ENCODE measurements at regions of chr11 and their contacts with region 1.

Region 1: DNA sequence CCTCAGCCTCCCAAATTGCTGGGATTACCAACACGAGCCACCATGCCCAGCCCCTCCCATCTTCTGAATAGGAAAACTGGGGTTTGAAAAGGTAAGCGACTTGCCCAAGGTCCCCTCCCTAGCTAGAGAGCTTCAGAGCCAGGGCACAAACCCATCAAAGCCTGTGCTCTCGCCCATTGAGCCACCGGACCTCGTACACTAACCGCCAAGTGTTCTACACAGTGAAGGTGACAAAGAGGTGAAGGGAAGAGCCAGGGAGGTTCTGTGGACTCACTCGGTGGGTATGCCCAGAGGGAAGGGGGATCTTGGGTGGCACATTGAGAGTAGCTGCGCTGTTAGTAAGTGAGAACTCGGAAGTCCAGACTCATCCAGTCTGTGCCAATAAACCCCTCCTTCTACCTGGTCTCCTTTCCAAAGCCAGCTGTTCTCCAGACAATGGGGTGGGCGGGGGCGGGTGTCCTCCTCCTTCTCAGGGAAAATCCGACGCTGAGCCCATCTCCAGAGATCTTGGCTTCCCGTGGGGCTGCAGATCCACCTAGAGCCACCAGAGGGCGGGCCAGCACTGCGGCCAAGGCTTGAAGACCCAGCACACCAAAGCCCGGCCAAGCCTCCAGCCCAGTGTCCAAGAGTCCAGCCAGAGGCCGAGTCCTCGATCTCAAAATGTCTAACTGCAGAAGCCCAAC is 3.2 kb upstream of the RTN4RL2 start:
- DNase-seq: peak; percentile 93
- ATAC-seq: peak; percentile 85 to 86

Region 2: DNA sequence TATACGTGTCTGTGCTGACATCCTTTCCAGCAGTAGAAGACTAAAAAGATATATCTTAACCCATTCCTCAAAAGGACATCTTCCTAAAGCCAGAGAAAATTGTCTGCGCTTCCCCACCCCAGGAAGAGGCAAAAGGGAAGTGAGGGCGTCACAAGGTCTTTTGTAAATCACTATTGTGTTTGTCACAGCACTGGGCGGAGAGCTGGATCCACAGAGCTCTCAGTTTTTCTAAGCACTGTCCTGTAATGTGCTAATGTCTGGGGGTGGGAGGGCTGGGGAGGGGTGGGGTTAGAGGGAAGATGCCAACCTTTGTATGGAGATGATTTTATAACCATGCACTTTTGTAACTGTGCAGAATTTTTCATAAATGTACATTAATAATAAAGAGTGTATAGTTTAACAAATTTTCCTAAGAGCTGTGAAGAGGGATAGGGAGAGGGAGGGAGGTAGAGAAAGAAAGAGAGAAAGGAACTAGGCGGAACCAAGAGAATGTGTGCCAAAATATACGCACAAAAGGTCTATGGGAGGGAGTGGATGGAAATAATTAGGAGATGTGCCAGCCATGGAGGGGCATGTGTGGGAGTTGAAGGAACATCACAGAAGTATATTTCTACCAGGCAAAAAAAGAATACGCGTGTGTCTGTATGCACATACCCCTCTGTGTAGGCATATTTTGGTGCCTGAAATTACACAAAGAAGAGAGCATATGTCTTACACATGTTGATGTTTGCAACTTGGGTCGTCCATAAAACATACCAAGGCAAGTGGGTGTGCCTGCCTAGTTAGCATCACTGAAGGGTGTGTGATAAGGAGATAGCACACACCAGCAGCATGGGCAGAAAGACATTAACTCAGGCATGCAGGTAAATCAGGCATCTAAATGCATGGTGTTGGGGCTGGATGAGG is 265.5 kb before region 1 on chr11:
- intact Hi-C with region 1: no loop called
- DNase-seq: no peak
- ATAC-seq: no peak

Region 3: DNA sequence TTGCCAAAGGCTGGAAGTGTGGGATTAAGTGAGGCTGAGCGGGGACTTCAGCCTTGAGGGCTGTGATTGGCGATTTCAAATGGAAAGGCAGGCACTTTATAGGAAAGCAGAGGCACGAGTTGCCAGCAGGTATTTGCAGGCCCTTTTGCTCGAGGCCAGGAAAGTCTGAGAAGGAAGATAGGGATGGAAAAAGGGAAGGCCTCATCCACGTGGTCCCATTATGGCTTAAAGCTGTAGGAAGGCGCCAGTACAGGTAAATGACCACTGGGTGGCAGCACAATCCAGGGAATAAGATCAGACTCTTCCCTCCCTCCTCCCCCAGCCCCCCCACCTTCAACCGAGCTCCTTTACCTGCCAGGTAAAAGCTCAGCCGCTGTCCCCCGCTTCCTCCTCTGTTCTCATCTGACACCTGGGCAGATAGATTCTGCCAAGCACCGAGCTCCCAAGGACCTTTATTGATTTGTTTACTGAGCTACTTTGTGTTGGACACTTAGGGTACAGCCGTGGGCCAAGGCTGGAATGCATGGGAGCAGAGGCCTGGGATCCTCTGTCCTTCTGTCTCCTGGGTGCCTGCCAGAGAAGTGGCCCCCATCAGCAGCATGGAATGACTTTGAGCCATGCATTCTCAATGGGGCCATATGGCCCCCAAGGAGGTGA is 111.4 kb before region 1 on chr11:
- intact Hi-C with region 1: loop called in 1 of 2 experiments (anchors 2 kb)
- DNase-seq: peak; percentile 74
- ATAC-seq: peak; percentile 68 to 75

Region 4: DNA sequence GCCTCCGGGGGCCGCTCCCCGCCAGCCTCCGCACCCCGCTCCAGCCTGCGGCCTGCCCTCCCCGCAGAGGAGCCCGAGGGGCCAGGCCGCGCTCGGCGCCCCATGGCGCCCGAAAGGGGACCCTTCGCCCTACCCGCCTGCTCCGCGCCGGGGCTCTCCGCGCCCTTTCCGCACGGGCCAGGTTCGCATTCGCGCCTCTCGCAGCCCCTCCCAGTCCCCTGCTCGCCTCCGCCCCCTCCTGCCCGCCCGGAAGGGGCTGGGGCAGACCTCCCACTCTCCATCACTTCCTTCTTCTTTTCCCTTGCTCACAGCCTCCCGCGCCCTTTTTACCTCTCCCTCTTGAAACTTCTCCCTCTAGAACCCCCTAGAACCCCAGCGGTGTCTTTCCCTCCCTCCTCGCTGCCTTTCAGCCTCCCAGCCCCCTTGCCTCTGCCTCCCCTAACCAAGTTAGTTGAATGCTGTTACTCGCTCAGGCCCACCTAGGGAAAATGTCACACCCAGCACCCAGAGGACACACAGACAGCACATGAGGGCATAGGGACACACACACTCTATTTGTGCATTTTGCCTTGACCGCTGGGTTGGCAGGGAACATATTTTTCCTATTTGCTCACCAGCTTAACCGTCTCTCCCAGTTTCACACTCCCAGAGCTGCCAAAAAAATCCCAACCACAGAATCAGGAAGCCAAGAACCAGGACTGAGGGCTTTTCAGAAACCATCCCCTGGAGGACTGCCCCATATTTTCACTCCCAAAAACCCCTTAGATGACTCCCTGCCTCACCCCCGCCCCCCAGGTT is 30.0 kb before region 1 on chr11 and contains the start of gene SLC43A3:
- intact Hi-C with region 1: no loop called
- DNase-seq: peak; percentile 74
- ATAC-seq: peak; percentile 72 to 82
- total RNA-seq, gene SLC43A3: 39.3 to 46.7 TPM

Region 5: DNA sequence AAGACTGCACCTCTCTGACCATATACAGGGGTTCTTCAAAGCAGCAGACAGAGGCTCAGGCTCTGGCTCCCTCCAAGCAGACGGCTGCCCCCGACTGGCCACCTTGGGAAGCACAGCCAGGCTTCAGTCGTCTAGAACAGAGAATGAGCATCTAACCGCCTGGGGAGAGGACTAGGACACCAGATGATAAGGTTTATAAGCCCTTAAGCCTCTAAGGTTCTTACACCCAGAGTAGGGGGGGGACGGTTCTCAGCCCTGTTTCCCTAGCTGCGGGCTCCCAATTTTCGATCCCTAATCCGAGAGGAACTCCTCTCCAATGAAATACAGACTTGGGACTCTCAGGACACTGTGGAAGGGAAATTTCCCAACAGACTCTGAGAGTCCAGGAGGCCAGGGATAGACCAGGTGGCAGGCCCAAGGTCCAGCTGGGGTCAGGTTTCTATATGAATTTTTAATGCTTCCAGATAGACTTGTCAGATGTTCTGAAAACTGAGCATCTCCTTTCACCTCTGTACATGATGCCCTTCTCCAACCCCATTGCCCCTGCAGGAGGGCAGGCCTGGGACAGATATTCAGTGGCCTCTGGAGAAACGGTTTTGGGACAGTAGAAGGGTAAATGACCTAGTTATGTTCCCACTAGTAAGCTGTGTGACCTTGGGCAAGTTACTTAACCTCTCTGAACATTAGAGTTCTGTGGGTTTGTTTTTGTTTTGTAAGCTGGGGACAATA is 23.5 kb after region 1 on chr11:
- intact Hi-C with region 1: loop called in 1 of 2 experiments (anchors 2 kb)
- DNase-seq: peak; percentile 61
- ATAC-seq: peak in 1 of 2 donors; percentile 40

Region 6: DNA sequence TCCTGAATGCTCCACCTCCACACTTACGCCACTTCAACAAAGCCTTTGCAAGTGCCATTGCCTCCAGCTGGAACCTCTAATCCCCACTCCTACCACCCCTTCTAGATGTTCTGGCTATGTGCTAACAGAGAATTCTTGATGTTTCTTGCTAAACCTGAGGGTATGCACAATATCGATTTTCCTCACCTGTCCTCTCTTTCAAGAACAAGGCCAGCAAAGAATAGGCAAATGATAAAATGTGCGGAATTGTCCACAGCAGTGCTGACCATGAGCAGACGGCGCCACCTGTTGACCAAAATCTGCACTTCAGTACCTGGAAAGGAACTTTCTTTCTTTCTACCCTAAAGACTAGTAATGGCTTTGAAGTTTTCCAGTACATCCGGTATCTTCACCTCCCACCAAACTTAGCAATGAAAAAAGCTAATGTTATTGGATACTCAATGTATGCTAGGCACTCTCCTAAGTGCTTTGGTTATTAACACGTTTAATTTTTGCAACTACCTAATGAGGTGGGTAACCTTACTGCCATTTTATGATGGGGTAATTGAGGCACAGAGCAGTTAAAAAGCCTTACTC is 70.0 kb after region 1 on chr11:
- intact Hi-C with region 1: loop called (anchors 2 to 5 kb)
- DNase-seq: peak; percentile 75
- ATAC-seq: peak; percentile 10 to 18

Region 7: GRCh38 chr11:57644748-57645688 is 187.9 kb after region 1 on chr11:
- intact Hi-C with region 1: loop called (anchors 5 to 10 kb)
- DNase-seq: peak; percentile 75
- ATAC-seq: peak; percentile 72 to 76

Region 8: DNA sequence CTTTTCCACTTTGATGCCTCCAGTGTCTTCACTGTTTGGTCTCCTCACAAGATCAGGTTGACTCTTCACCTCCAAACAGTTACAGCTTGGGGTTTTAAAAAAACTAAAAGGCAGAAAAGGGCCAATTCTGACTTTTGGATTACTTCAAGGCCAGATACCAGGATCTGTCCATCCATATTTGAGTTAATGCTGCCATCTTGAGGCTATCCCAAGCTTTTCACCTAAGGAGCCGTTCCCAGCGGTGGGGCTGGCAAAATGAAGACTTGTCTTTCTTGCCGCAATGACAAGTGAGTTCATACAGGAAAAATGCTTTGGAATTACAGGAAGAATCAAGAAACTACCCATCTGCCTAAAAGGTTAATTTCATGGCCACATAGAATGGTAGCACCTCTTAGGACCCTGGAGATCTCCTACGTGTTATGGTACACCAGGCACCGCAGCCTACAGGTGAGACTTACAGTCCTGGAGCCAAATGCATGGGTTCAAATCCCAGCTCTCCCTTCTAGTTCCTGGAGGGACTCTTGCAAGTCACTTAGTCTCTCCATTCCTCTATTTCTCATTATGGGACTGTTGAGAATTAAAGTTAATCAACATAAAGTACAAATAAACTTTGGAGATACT is 1056.8 kb after region 1 on chr11:
- intact Hi-C with region 1: loop called (anchors 10 kb)
- DNase-seq: peak; percentile 19
- ATAC-seq: peak; percentile 80 to 81